ENCODE measurements at regions of chr9 and their contacts with region 1.

Region 1: GRCh38 chr9:83544002-83544698 is 5.9 kb upstream of the FRMD3 start:
- DNase-seq: peak; percentile 8
- ATAC-seq: peak; percentile 89
- H3K4me3 ChIP-seq: no peak overlapping the region
- H3K27ac ChIP-seq: no peak overlapping the region
- H3K4me1 ChIP-seq: peaks cover under 1% of the 10 kb centered on the region; the same call in 1 of the 2 replicates
- H3K27me3 ChIP-seq: no peaks in the 10 kb centered on the region
- CTCF ChIP-seq: peak; percentile 72

Region 2: DNA sequence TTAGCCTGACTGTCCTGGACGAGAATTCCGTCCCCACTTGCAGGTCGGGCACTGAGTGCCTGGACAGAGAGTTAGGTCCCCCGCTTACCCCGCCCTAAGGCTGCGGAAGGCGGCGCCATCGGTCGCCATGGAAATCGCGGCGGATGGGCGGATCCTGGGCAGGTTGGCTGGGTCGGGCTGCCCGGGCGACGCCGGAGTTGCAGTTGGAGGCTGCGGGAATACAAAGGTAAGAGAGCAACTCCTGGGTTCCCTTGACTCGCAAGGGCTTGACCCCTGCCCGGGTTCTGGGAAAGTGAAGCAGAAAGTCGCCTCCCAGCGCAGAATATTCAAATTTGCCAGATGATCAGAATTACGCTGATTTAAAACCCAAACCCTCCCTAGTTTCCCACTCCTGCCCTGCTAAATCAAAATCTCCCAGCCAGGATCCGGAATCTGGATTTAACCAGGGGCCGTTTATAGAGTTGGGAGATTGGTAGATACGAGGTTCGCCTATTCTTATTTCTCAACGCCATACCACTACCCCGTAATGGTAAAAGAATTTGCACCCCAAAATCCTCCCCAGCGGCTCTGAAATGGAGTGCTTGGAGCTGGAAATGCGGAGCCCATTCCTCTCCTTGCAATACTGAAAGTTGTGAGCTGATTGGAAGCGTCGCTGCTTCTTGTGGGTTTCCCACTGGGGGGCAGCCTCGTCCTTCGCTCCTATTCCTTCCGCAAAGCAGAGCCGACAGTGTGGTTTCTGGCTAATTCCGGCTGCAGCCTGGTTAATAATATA is 324.8 kb before region 1 on chr9:
- CTCF ChIA-PET with region 1: interaction called, 7 read pairs
- POLR2A ChIA-PET with region 1: no interaction called
- in situ Hi-C with region 1: no loop called
- intact Hi-C with region 1: loop called (anchors 10 kb)
- DNase-seq: peak; percentile 28
- ATAC-seq: peak; percentile 96
- H3K4me3 ChIP-seq: peak overlapping the region; percentile 70 to 73
- H3K27ac ChIP-seq: peak overlapping the region; percentile 68
- H3K4me1 ChIP-seq: no peaks in the 10 kb centered on the region
- H3K27me3 ChIP-seq: no peaks in the 10 kb centered on the region
- CTCF ChIP-seq: peak; percentile 85

Region 3: GRCh38 chr9:83384214-83384613 is 159.9 kb before region 1 on chr9:
- CTCF ChIA-PET with region 1: no interaction called
- POLR2A ChIA-PET with region 1: interaction called, 10 read pairs
- in situ Hi-C with region 1: no loop called
- intact Hi-C with region 1: no loop called
- DNase-seq: no peak
- ATAC-seq: no peak
- H3K4me3 ChIP-seq: no peak overlapping the region
- H3K27ac ChIP-seq: no peak overlapping the region
- H3K4me1 ChIP-seq: no peaks in the 10 kb centered on the region
- H3K27me3 ChIP-seq: no peaks in the 10 kb centered on the region
- CTCF ChIP-seq: no peak

Region 4: DNA sequence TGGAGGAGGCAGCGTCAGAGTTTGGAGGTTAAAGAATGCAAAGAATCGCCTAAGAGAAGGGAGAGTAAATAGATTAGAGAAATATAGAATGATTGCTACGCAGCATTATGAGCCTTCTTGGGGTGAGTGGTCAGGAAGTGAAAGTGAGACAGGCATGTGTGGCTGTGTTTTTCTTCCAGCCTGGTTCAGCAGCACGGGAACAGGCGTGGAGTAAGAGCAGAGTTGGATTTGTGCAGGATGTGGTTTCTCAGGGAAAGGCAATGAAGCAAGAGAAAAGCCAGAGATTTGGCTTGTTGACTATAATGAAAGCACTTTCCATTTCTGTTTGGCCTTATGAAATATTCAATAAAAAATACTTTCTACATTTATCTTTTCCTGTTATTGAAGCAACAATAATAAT is 28.4 kb after region 1 on chr9:
- CTCF ChIA-PET with region 1: no interaction called
- POLR2A ChIA-PET with region 1: no interaction called
- in situ Hi-C with region 1: no loop called
- intact Hi-C with region 1: no loop called
- DNase-seq: no peak
- ATAC-seq: no peak
- H3K4me3 ChIP-seq: no peak overlapping the region
- H3K27ac ChIP-seq: no peak overlapping the region
- H3K4me1 ChIP-seq: no peaks in the 10 kb centered on the region
- H3K27me3 ChIP-seq: no peaks in the 10 kb centered on the region
- CTCF ChIP-seq: no peak

Region 5: GRCh38 chr9:83681490-83681889 is 137.3 kb after region 1 on chr9:
- CTCF ChIA-PET with region 1: no interaction called
- POLR2A ChIA-PET with region 1: no interaction called
- in situ Hi-C with region 1: no loop called
- intact Hi-C with region 1: no loop called
- DNase-seq: no peak
- ATAC-seq: no peak
- H3K4me3 ChIP-seq: no peak overlapping the region
- H3K27ac ChIP-seq: no peak overlapping the region
- H3K4me1 ChIP-seq: no peaks in the 10 kb centered on the region; the same call in 1 of the 2 replicates
- H3K27me3 ChIP-seq: no peaks in the 10 kb centered on the region
- CTCF ChIP-seq: no peak